ENCODE measurements at regions of chr10 and their contacts with region 1.

Region 1: DNA sequence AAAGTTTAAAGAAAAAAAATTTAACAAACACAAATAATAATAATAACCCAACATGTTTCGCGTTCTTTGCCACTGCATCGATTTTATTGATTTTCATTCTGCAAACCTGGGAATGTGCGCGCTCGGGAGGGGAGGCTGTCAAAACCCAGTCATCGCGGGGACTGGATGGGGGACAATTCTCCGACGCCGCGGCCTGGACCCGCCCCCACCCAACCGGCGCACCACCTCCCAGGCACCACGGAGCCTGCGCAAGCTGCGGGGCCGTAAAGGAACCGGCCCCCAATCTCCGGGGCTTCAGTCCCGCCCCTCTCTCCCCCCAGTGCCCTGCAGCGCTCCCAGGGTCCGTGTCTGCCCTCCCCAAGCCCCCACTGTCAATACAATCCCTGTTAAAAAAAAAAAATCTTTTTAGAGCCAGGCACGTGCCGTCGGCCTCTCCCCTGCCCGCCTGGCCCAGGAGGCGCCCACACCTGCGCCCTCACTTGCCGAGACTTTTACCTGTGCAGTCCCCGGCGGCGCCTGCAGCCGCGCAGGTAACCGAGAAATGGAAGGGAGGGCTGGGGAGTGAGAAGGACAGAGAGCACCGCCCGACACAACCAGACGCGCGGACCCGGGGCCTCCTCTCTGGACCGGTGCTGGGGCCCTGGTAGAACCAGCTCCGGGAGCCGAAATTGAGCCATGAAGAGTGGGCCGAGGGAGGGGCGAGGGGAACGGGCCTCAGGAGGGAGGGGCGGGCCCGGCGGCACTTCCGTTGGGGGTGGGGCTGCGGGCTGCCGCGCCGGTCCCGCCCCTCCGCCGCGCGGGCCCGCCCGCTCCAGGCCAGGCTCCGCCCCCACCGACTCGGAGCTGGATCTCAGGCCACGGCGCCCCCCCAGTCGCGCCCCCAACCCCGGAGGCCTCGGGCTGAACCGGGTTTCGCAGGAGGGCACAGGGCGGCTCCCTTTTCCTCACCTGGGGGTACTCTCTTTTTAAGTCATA is 7.6 kb upstream of the ZNF503 start:
- DNase-seq: peak; percentile 85 to 88 (median 87)
- H3K4me3 ChIP-seq: peak overlapping the region; percentile 83
- H3K27ac ChIP-seq: peak overlapping the region; percentile 63 to 68
- H3K4me1 ChIP-seq: peaks cover 6% of the 10 kb centered on the region
- H3K27me3 ChIP-seq: no peaks in the 10 kb centered on the region
- CTCF ChIP-seq: no peak
- EP300 ChIP-seq: no peak
- POLR2A ChIP-seq: peak; percentile 37

Region 2: DNA sequence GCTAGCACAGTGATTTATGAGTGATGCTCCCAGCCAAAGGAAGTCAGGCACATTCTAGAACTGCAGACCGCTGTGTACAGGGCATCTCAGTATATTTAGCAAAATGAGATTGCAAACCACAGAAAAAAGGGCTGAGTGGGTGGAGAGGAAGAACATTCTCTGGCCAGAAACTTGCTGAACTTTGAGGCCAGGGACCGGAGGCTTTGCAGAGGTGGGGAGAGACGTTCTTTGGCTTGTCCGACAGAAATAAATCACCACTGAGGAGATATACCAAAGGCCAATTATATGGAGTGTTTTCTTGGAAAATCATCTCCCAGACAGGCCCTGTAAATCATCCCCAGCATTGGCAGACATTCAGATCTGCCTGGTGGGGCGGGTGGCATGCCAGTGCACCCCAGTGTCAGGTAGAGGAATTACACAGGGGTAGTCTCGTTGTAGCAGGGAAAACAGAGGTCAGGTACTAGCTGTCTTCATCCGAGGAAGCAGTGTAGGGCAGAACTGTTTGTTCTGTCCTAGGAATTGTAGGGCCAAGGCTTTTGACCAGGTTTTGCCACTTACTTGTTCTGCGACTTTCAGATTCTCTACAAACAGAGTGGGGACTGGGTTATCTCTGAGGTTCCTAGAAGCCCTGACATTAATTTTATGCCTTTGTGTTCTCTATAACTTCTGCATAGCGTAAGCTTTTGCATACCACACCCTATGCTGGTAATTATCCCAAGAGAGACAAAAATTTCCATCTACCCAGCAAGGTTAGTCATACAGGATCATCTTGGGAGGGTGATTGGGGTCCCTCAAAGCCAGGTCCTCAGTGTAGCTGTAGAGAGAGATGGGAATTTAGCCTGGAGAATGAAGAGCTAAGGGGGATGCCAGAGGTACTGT is 677.8 kb after region 1 on chr10:
- intact Hi-C with region 1: loop called in 2 of 4 experiments (anchors 5 kb)
- DNase-seq: peak; percentile 76 to 84 (median 83)
- H3K4me3 ChIP-seq: no peak overlapping the region
- H3K27ac ChIP-seq: peak overlapping the region; percentile 25 to 28
- H3K4me1 ChIP-seq: peaks cover 16% of the 10 kb centered on the region
- H3K27me3 ChIP-seq: no peaks in the 10 kb centered on the region
- CTCF ChIP-seq: peak; percentile 49 to 65 (median 59)
- EP300 ChIP-seq: no peak
- POLR2A ChIP-seq: no peak

Measured in ovary (tissue), 10 donors.